Activated CD4-positive, alpha-beta memory T cell treated with anti-CD3 and anti-CD28 coated beads, Interleukin-2, amount 10 ng/mL, durations not matched to agents 7 days and 5 days (primary cell): ENCODE measurements at regions of chr2 and their contacts with region 1.

Region 1: GRCh38 chr2:175282290-175282689 is 100.8 kb upstream of the ATP5MC3 start:
- DNase-seq: no peak
- H3K4me3 Mint-ChIP-seq: no peak overlapping the region
- H3K27ac Mint-ChIP-seq: no peak overlapping the region
- H3K4me1 Mint-ChIP-seq: no peaks in the 10 kb centered on the region
- H3K27me3 Mint-ChIP-seq: peaks cover 4% of the 10 kb centered on the region

Region 2: GRCh38 chr2:175203621-175204496 is 78.4 kb before region 1 on chr2:
- CTCF ChIA-PET with region 1: interaction called, 19 read pairs
- POLR2A ChIA-PET with region 1: no interaction called
- DNase-seq: peak; percentile 57
- H3K4me3 Mint-ChIP-seq: no peak overlapping the region
- H3K27ac Mint-ChIP-seq: no peak overlapping the region
- H3K4me1 Mint-ChIP-seq: no peaks in the 10 kb centered on the region
- H3K27me3 Mint-ChIP-seq: peaks cover 20% of the 10 kb centered on the region

Region 3: DNA sequence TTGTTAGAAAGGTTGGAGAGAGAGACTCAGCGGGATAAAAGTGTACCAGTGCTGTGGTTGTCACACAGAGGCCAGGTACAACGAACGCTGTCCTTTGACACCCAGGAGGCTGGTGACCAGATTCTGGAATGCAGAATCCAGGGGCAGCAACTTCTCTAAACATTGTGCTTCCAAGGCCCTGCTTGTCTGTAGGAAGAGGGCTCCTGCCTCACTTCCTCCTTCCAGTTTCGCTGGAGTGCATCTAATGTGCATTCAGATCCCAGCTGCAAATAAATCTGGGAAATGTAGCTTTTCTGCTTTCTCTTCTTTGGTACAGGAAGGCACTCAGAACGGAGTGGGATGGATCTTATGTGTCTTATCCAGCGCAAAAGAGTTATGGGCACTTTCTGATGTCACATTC is 71.0 kb after region 1 on chr2:
- CTCF ChIA-PET with region 1: no interaction called
- POLR2A ChIA-PET with region 1: no interaction called
- DNase-seq: no peak
- H3K4me3 Mint-ChIP-seq: no peak overlapping the region
- H3K27ac Mint-ChIP-seq: no peak overlapping the region
- H3K4me1 Mint-ChIP-seq: no peaks in the 10 kb centered on the region
- H3K27me3 Mint-ChIP-seq: peaks cover 19% of the 10 kb centered on the region